BJ (cell line): ENCODE measurements at regions of chr10 and their contacts with region 1.

Region 1: GRCh38 chr10:124388823-124389612 is 29.7 kb downstream of the OAT start:
- DNase-seq: no peak
- H3K4me3 ChIP-seq: peak overlapping the region; percentile 28
- H3K27me3 ChIP-seq: 0 out of 2 replicates have a peak, but pooled peaks cover 1% of the 10 kb centered on the region
- CTCF ChIP-seq: peak; percentile 86

Region 2: GRCh38 chr10:124025660-124026588 is 363.1 kb before region 1 on chr10:
- CTCF ChIA-PET with region 1: interaction called, 16 read pairs
- POLR2A ChIA-PET with region 1: no interaction called
- DNase-seq: no peak
- H3K4me3 ChIP-seq: no peak overlapping the region
- H3K27me3 ChIP-seq: no peaks in the 10 kb centered on the region; the same call in 1 of the 2 replicates
- CTCF ChIP-seq: peak; percentile 42; the same call in 1 of the 2 replicates

Region 3: GRCh38 chr10:124289851-124290795 is 98.9 kb before region 1 on chr10:
- CTCF ChIA-PET with region 1: interaction called, 38 read pairs
- POLR2A ChIA-PET with region 1: no interaction called
- DNase-seq: peak; percentile 21
- H3K4me3 ChIP-seq: no peak overlapping the region
- H3K27me3 ChIP-seq: no peaks in the 10 kb centered on the region
- CTCF ChIP-seq: no peak

Region 4: GRCh38 chr10:124301736-124302135 is 87.3 kb before region 1 on chr10:
- CTCF ChIA-PET with region 1: interaction called, 38 read pairs
- POLR2A ChIA-PET with region 1: no interaction called
- DNase-seq: no peak
- H3K4me3 ChIP-seq: no peak overlapping the region
- H3K27me3 ChIP-seq: no peaks in the 10 kb centered on the region
- CTCF ChIP-seq: no peak

Region 5: DNA sequence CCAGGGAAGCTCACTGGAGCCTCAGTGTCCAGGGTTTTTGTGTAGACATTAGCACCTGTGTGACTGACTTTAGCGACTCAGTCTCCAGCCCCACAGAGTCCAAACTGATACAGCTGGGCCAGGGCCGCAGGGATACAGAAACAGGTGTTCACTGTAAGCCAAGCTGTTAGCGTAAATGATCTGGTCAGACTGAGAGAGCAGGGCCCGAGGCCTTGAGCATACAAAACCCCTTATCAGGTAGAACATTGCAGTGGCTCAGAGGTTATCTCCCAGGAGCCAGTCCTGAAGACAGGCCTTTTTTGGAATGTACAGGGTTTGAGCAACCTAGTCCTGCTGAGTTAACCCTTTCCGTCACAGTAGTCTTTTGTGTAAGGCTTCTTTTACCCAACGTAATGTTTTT is 97.6 kb after region 1 on chr10:
- CTCF ChIA-PET with region 1: no interaction called
- POLR2A ChIA-PET with region 1: no interaction called
- DNase-seq: no peak
- H3K4me3 ChIP-seq: no peak overlapping the region
- H3K27me3 ChIP-seq: no peaks in the 10 kb centered on the region
- CTCF ChIP-seq: no peak